ENCODE measurements at regions of chr2 and their contacts with region 1.

Region 1: DNA sequence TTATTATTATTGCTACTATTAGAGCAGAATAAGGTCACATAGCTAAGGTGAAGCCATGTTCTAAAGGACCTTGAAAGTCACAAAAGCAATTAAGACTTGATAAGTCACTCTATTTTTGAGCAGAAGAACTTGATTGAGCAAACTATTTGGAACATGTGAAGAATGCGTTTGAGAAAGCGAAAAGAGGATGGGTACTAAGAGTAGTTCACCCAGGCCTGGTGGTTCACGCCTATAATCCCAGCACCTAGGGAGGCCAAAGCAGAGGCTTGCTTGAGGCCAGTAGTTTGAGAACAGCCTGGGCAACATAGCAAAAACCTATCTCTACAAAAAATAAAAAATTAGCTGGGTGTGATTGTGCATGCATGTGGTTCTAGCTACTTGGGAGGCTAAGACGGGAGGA is 7.2 kb upstream of the RTN4 start:
- DNase-seq: no peak
- ATAC-seq: no peak
- H3K4me3 Mint-ChIP-seq: no peak overlapping the region
- H3K27ac Mint-ChIP-seq: no peak overlapping the region
- H3K4me1 Mint-ChIP-seq: peaks cover 5 to 27% (median 20%) of the 10 kb centered on the region in 4 donors
- H3K27me3 Mint-ChIP-seq: no peaks in the 10 kb centered on the region

Region 2: DNA sequence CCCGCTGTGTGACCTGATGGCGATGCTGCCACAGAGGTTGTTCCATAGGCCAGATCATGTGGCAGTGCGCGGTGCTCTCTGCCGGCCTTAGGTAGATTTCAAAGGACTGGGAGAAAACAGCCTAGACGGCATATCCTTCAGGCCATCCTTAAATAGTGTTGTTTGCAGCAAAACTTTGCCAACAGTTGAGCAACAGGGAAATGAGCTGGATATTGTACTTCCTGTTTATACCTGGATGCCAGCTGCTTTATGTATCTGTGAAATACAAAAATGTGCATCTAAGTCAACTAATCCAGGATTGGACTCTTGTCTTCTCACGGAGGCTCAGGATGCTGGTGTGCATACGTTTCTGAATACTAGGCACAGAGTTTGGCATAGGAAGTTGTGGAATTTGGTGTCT is 226.9 kb before region 1 on chr2:
- POLR2A ChIA-PET with region 1: no interaction called
- DNase-seq: no peak
- ATAC-seq: no peak
- H3K4me3 Mint-ChIP-seq: no peak overlapping the region
- H3K27ac Mint-ChIP-seq: no peak overlapping the region
- H3K4me1 Mint-ChIP-seq: no peaks in the 10 kb centered on the region
- H3K27me3 Mint-ChIP-seq: peaks cover 0 to 7% (median 5%) of the 10 kb centered on the region in 5 donors

Region 3: GRCh38 chr2:54952978-54953545 is 104.4 kb before region 1 on chr2:
- POLR2A ChIA-PET with region 1: interaction called, 10 read pairs
- DNase-seq: no peak
- ATAC-seq: no peak
- H3K4me3 Mint-ChIP-seq: no peak overlapping the region
- H3K27ac Mint-ChIP-seq: peak overlapping the region in 2 of 10 donors; percentile 34 to 44
- H3K4me1 Mint-ChIP-seq: peaks cover 0 to 2% (median 0%) of the 10 kb centered on the region in 4 donors
- H3K27me3 Mint-ChIP-seq: peaks cover 0 to 15% (median 4%) of the 10 kb centered on the region in 5 donors

Region 4: GRCh38 chr2:55133467-55134315 is 76.2 kb after region 1 on chr2:
- POLR2A ChIA-PET with region 1: no interaction called
- DNase-seq: peak in 9 of 10 donors; percentile 15 to 81 (median 69)
- ATAC-seq: peak; percentile 91 to 92
- H3K4me3 Mint-ChIP-seq: peak overlapping the region; percentile 73 to 94 (median 90)
- H3K27ac Mint-ChIP-seq: peak overlapping the region; percentile 89 to 98 (median 97)
- H3K4me1 Mint-ChIP-seq: peaks cover 20 to 47% (median 40%) of the 10 kb centered on the region in 4 donors
- H3K27me3 Mint-ChIP-seq: no peaks in the 10 kb centered on the region

Region 5: DNA sequence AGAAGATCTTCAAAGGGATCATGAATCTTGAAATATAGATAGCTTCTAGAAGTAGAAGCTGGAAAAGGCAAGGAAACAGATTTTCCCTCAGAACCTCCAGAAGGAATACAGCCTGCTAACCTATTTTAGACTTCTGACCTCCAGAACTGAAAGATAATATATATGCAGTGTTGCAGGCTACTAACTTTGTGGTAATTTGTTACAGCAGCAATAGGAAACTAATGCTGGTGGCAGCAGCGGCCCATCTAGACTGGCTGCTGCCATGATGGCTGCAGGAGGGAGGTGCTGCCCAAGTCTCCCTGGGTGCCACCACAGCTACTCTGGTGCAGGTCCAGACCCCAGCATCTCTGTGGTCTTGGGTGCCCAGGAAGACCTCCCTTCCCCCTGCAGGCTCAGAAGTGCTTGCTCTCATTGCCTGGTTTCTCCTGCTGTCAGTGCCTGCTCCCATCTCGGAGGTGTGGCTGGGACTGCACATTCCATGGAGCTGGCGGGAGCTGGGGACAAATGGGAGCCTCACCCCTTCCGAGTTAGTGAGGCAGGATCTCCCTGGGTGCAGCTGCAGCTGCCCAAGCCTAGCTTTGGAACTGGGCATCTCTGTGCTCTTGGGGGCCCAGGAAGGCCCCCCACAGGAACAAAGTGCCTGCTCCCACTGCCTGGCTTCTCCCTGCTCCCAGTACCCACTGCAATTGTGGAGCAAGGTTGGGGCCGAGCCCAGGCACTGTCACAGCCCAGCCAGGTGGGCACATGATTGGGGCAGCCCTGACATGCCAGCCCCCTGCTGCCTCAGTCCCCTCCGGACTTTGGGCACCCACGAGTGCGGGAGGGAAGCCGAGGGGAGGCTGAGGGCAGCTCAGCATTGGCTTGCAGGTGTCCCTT is 380.3 kb after region 1 on chr2:
- POLR2A ChIA-PET with region 1: no interaction called
- DNase-seq: no peak
- ATAC-seq: no peak
- H3K4me3 Mint-ChIP-seq: no peak overlapping the region
- H3K27ac Mint-ChIP-seq: no peak overlapping the region
- H3K4me1 Mint-ChIP-seq: no peaks in the 10 kb centered on the region
- H3K27me3 Mint-ChIP-seq: peaks cover 0 to 8% (median 4%) of the 10 kb centered on the region in 5 donors